Posterior cingulate gyrus (tissue), 11 donors: ENCODE measurements at regions of chrX and their contacts with region 1.

Region 1: DNA sequence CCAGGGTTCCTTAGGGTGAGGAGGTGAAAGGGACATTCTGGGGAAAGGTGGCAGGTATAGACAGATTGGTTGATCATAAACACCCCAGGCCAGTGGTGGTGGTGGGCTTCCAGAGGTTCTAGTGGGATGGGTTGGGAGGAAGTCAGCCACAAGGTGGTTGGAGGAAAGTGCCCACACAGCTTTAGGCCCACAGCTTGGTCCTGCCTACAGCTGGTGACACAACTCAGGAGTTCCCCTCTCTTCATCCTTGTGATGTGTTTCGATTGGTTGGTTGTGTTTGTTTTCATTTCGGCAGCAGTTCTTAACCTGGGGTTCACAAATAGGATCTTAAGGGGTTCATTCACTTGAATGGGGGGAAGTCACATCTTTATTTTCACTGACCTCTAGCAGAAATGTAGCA is 157.0 kb downstream of the TMEM164 start:
- DNase-seq: no peak

Region 2: GRCh38 chrX:110219920-110220319 is 60.1 kb after region 1 on chrX:
- intact Hi-C with region 1: no loop called
- DNase-seq: no peak

Region 3: GRCh38 chrX:110407910-110408545 is 248.2 kb after region 1 on chrX:
- intact Hi-C with region 1: loop called (anchors 1 kb)
- DNase-seq: peak in 1 of 10 donors; percentile 40